ENCODE measurements at regions of chr2 and their contacts with region 1.

Region 1: DNA sequence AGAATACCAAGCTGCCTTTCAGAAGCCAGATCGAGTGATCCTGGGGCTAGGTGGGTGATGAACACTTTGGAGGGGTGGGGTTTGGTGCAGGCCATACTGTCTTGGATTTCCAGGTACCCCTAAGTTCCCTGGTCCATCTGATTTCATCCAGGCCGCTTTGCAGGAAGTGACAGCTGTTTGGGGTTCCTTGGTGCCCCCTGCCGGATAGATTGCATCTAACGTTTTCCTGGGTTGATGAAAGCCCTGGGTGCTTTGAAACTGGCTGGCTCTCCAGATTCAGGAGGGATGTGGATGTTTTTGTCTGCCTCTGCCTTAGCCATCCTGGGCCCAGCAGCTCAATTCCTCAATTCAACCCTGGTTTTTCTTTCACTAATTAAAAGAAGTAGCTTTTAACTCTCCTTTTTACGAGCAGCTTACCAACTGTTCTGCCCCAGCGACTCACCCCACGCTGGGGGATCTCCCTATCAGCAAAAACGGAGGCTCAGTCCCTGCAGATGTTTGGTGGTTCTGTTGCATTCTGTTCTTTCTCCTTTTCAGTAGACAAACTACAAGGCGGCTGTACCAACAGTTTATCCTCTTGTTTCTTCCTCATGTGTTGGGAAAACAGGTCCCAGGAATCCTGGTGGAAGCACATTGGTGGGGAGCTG is 37.1 kb downstream of the ARHGEF4 start:
- DNase-seq: peak; percentile 64 to 82
- ATAC-seq: peak; percentile 78

Region 2: DNA sequence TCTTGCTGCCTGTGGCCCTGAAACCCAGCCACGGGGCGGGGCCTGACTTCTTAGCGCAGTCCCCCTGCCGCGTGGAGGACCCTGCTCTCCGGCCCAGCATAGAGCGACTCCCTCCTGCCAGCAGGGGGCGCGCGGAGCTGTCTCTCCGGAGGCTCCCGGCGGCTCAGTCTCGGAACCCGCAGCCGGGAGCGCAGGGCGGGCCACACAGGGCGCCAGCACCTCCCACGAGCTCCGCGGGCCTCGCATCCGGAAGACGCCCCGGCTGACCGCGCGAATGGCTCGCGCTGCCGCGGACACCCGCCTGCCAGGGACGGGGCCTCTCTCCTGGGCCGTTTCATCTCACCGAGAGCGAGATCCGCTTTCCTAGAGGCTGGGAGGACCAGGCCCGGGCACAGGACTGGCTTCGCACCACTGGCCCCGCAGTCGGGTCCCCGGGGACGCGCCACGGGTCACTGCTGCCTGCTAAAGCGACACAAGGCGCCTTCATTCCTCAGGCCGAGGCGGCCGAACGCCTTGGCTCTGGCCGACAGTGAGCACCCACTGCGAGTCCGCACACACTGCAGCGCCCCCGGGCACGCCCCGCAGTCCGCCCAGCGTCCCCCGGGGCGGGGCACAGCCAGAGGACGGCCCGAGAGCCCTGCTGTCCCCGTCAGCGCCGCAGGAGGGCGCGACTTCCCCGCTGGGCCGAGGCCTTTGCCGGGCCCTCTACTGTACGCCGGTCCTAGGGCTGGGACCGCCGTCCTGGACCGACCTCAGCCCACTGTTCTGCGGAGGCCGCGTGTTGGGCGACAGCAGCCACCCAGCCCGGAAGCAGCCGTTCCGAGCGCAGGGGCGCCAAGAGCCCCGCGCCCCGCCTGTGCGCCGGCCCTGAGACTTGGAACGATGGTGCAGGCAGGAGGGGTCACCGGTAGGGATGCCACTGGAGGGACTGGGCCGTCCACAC is 76.1 kb before region 1 on chr2:
- intact Hi-C with region 1: loop called in 1 of 2 experiments (anchors 5 kb)
- DNase-seq: peak; percentile 78 to 95
- ATAC-seq: peak; percentile 94

Region 3: DNA sequence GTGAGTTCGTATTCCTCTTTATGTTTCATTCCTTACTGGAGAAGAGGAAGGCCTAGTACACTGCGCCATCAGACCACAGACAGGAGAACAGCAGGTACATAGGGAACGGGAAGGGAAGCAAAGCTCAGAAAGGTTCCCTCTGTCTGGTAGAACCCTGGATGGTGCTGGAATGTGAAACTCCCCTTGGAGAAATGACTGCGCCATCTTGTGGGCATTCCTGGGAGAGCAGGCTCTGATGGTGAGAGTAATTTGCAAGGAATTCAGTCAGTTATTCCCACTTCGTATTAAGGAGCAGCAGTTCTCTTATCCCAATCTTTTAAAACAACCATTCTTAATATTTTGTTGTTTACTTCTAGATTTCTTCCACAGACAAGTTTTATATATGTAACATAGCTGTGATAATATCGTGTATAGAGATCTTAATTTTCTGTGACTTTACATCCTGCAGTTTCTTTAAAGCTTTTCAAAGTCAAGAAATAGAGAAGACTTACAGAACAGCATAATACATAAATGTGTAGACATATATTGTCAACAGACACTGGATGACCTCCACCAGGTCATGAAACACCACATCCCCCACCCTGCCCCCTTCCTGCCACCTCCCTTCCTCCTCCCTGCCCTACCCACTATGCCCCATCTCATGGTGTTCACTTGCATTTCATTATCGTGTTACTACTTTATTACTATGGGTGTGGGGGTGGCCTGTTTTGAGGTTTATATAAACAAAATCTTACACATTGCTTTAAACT is 46.8 kb after region 1 on chr2:
- intact Hi-C with region 1: no loop called
- DNase-seq: peak in 1 of 2 donors; percentile 78
- ATAC-seq: peak; percentile 70